AG04449 (cell line): ENCODE measurements at regions of chr3 and their contacts with region 1.

Region 1: GRCh38 chr3:194671900-194672808 is at the start of gene LSG1:
- DNase-seq: peak; percentile 71
- H3K4me3 ChIP-seq: peak within 1 kb of the TSS; percentile 89
- CTCF ChIP-seq: no peak

Region 2: DNA sequence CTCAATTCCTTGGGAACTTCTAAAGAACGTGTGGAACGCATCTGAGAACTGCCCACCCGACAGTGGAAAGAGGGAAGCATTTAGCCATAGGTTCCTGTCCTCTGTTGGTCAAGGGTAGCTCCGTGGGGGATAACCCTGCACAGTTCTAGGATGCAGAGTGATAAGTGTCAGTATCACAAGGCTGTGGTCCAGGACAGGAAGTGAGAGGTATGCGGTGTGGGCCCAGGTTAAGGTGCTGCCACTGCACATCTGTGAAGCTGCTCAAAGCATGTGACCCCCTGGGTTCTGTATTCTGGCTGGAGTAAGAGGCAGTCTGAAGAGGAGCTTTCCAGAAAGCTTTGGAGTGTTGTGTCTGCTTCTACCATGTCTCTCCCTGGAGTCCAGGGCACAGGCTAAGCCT is 587.9 kb before region 1 on chr3:
- CTCF ChIA-PET with region 1: no interaction called
- POLR2A ChIA-PET with region 1: no interaction called
- DNase-seq: no peak
- H3K4me3 ChIP-seq: no peak overlapping the region
- CTCF ChIP-seq: no peak

Region 3: DNA sequence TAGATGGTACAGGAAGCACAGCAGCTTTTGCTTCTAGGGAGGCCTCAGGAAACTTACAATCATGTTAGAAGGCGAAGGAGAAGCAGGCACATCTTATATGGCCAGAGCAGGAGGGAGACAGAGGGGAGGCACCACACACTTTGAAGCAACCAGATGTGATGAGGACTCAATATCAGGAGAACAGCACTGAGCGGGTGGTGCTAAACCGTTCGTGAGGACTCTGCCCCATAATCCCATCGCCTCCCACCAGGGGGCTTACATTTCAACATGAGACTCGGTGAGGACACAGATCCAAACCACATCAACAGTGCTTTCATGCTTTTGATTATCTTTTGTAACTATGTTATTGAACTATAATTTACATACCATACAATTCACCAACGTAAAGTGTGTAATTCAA is 31.3 kb before region 1 on chr3:
- CTCF ChIA-PET with region 1: interaction called, 13 read pairs
- POLR2A ChIA-PET with region 1: no interaction called
- DNase-seq: no peak
- H3K4me3 ChIP-seq: no peak overlapping the region
- CTCF ChIP-seq: peak; percentile 21

Region 4: GRCh38 chr3:194654443-194654842 is 17.7 kb before region 1 on chr3:
- CTCF ChIA-PET with region 1: interaction called, 62 read pairs
- POLR2A ChIA-PET with region 1: no interaction called
- DNase-seq: no peak
- H3K4me3 ChIP-seq: no peak overlapping the region
- CTCF ChIP-seq: no peak

Region 5: DNA sequence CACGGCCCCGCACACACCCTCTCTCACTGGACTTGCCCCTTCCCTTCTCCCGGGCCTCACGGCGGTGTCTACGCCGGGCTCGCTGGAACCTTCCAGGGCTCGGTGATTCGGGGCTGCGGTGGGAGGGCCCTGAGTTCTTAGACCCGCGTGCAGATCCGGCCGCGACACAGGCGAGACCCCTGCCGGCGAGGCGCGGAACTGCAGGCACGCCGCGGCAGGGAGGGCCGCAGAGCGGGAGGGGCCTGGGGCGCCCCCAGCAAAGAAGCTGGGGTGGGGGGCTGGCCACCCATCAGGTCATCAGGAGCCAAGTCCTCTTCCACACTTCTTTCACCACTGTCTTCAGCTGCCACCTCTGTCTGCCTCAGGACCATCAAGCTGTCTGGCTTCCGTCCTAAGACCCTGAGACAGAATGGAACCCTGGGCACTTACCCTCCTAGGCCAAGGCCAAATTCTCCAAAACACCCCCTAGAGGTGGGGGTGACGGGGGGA is 434.3 kb after region 1 on chr3:
- CTCF ChIA-PET with region 1: interaction called, 33 read pairs
- POLR2A ChIA-PET with region 1: no interaction called
- DNase-seq: no peak
- H3K4me3 ChIP-seq: peak overlapping the region; percentile 33
- CTCF ChIP-seq: peak; percentile 99

Region 6: GRCh38 chr3:195259475-195260279 is 587.5 kb after region 1 on chr3:
- CTCF ChIA-PET with region 1: interaction called, 56 read pairs
- POLR2A ChIA-PET with region 1: no interaction called
- DNase-seq: no peak
- H3K4me3 ChIP-seq: peak overlapping the region; percentile 75
- CTCF ChIP-seq: peak; percentile 45